Activated CD4-positive, alpha-beta T cell treated with anti-CD3 and anti-CD28 coated beads for 36 hours (primary cell): ENCODE measurements at regions of chr10 and their contacts with region 1.

Region 1: GRCh38 chr10:77710759-77711682 is 73.4 kb upstream of the KCNMA1 start:
- DNase-seq: peak; percentile 86
- ATAC-seq: peak; percentile 96
- H3K4me3 Mint-ChIP-seq: no peak overlapping the region
- H3K27ac Mint-ChIP-seq: peak overlapping the region; percentile 43
- H3K4me1 Mint-ChIP-seq: peaks cover 14% of the 10 kb centered on the region
- H3K27me3 Mint-ChIP-seq: peaks cover 17% of the 10 kb centered on the region

Region 2: GRCh38 chr10:77165445-77166208 is 545.4 kb before region 1 on chr10:
- CTCF ChIA-PET with region 1: interaction called, 19 read pairs
- POLR2A ChIA-PET with region 1: no interaction called
- intact Hi-C with region 1: loop called in 1 of 2 experiments (anchors 1 kb)
- DNase-seq: peak; percentile 55
- ATAC-seq: peak; percentile 66
- H3K4me3 Mint-ChIP-seq: no peak overlapping the region
- H3K27ac Mint-ChIP-seq: no peak overlapping the region
- H3K4me1 Mint-ChIP-seq: no peaks in the 10 kb centered on the region
- H3K27me3 Mint-ChIP-seq: peaks cover 18% of the 10 kb centered on the region

Region 3: GRCh38 chr10:77173615-77174461 is 537.2 kb before region 1 on chr10:
- CTCF ChIA-PET with region 1: interaction called, 19 read pairs
- POLR2A ChIA-PET with region 1: no interaction called
- intact Hi-C with region 1: loop called (anchors 1 to 2 kb)
- DNase-seq: peak; percentile 82
- ATAC-seq: peak; percentile 53
- H3K4me3 Mint-ChIP-seq: no peak overlapping the region
- H3K27ac Mint-ChIP-seq: no peak overlapping the region
- H3K4me1 Mint-ChIP-seq: no peaks in the 10 kb centered on the region
- H3K27me3 Mint-ChIP-seq: peaks cover 6% of the 10 kb centered on the region

Region 4: GRCh38 chr10:77641788-77642397 is 69.1 kb before region 1 on chr10:
- CTCF ChIA-PET with region 1: interaction called, 4 read pairs
- POLR2A ChIA-PET with region 1: no interaction called
- intact Hi-C with region 1: loop called in 1 of 2 experiments (anchors 2 kb)
- DNase-seq: peak; percentile 69
- ATAC-seq: no peak
- H3K4me3 Mint-ChIP-seq: no peak overlapping the region
- H3K27ac Mint-ChIP-seq: no peak overlapping the region
- H3K4me1 Mint-ChIP-seq: peaks cover 2% of the 10 kb centered on the region
- H3K27me3 Mint-ChIP-seq: peaks cover 29% of the 10 kb centered on the region

Region 5: GRCh38 chr10:77692782-77693181 is 18.2 kb before region 1 on chr10:
- CTCF ChIA-PET with region 1: interaction called, 11 read pairs
- POLR2A ChIA-PET with region 1: no interaction called
- intact Hi-C with region 1: no loop called
- DNase-seq: no peak
- ATAC-seq: no peak
- H3K4me3 Mint-ChIP-seq: no peak overlapping the region
- H3K27ac Mint-ChIP-seq: no peak overlapping the region
- H3K4me1 Mint-ChIP-seq: no peaks in the 10 kb centered on the region
- H3K27me3 Mint-ChIP-seq: peaks cover 14% of the 10 kb centered on the region

Region 6: DNA sequence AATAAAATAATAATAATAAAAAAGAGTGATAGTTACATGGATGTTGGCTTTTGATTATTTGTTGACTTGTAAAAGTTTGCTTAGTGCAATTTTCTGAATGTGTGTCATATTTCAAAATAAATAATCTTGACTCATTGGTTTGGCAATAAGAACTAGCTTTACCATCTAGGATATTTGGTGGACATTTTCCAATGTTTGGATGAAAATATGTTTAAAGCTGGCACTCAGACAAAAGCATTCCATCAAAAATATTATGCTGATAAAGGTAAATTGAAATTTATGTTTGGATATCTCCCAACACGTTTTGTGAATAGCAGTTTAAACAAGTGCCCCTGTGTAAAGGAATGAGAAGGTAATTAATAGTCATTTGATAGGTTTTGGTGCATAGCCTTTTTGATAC is 10.9 kb before region 1 on chr10:
- CTCF ChIA-PET with region 1: interaction called, 11 read pairs
- POLR2A ChIA-PET with region 1: no interaction called
- intact Hi-C with region 1: no loop called
- DNase-seq: no peak
- ATAC-seq: no peak
- H3K4me3 Mint-ChIP-seq: no peak overlapping the region
- H3K27ac Mint-ChIP-seq: no peak overlapping the region
- H3K4me1 Mint-ChIP-seq: no peaks in the 10 kb centered on the region
- H3K27me3 Mint-ChIP-seq: peaks cover 16% of the 10 kb centered on the region

Region 7: DNA sequence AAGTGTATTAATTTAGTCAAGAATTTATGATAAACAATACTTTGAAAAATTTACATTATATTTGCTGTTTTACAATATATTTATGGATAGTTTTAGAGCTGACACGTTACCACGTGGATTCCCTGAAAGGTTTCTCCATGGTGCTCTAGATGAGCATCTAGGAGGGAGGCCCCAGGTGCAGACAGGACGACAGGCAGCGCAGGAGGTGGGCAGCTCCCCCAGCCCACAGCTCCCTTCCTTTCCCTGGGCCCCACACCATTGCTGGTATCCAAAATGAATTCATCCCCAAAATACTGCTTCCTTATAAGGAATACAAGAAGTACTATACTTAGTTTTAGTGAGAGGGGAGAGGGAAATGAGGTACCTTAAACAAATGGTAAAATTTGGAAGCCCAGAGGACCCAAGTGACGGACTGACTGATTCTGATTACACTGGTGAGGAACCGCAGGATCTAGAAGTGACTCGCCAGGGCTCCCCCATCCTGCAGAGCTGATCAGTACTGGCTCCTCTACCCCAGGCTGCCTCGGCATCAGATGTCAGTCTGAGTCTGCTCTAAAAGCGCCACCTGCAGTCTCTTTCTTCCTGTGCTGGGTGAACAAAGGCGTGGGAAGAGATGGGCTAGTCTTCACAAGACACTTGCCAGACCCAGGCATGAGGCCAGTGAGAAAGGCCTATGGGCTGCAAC is 126.4 kb after region 1 on chr10:
- CTCF ChIA-PET with region 1: interaction called, 11 read pairs
- POLR2A ChIA-PET with region 1: no interaction called
- intact Hi-C with region 1: loop called in 1 of 2 experiments (anchors 1 kb)
- DNase-seq: peak; percentile 89
- ATAC-seq: peak; percentile 92
- H3K4me3 Mint-ChIP-seq: no peak overlapping the region
- H3K27ac Mint-ChIP-seq: no peak overlapping the region
- H3K4me1 Mint-ChIP-seq: peaks cover 18% of the 10 kb centered on the region
- H3K27me3 Mint-ChIP-seq: no peaks in the 10 kb centered on the region

Region 8: GRCh38 chr10:77907900-77908717 is 197.1 kb after region 1 on chr10:
- CTCF ChIA-PET with region 1: no interaction called
- POLR2A ChIA-PET with region 1: no interaction called
- intact Hi-C with region 1: no loop called
- DNase-seq: peak; percentile 20
- ATAC-seq: no peak
- H3K4me3 Mint-ChIP-seq: no peak overlapping the region
- H3K27ac Mint-ChIP-seq: no peak overlapping the region
- H3K4me1 Mint-ChIP-seq: no peaks in the 10 kb centered on the region
- H3K27me3 Mint-ChIP-seq: peaks cover 4% of the 10 kb centered on the region